ENCODE measurements at regions of chr1 and their contacts with region 1.

Region 1: DNA sequence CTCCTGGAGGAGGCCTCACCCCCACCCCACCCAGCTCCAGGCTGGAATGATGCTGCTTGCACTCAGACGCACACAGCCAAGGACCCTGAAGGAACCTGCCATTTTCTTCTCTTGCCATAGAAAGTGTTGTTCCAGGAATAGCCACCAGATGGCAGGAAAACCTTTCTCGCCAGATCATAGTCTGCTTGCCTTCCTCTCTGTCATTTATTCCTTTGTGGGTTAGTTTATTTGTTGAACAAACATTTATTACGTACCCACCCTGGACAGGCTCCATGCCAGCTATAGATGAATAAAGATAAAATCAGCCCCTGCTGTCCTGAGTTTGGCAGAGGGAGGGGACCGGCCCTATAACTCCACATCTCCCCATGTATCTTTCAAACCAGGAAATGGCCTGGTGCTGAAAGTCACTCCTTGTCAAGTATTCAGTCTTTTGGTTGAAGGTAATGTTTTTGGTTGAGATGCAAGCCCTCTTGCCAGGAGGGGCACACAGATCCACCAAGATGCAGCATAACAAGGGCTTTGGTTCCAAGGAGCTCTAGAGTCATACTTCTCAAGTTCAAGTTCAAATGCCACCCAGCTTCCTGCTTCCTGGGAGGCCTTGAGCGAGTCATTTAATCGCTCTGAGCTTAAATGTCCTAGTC is 7.0 kb upstream of the KCNC4 start:
- DNase-seq: peak; percentile 88
- H3K4me3 Mint-ChIP-seq: no peak overlapping the region
- H3K27ac Mint-ChIP-seq: peak overlapping the region; percentile 81
- H3K4me1 Mint-ChIP-seq: peaks cover 21% of the 10 kb centered on the region
- H3K27me3 Mint-ChIP-seq: no peaks in the 10 kb centered on the region

Region 2: DNA sequence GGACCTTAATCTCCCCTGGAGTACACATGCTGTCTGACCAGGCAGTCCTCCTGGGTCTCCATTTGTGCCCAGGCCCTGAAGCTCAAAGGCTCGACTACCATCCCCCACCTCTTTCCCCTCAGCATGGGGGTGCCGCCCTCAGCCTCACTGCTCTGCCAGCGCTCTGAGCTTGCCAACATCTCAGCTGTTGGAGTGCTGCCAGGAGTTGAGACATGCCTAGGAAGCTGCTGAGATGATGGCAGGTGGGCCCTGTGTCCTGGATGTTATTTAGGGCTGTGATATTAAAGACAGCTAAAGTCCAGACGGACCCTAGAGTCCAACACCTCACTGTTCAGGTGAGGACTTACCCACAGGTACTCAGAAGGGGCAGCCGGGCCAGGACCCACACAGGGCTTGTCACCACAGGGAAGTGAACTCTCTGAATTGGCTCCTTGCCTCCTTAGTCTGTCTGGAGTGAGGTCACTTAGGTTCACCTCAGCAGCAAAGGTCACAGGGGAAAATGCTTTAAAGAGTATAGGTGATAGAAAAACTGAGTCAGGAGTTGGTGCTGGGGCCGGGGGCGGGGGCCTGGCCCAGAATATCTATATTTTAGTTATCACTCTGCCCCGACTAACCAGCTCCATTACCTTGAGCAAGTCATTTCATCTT is 12.7 kb before region 1 on chr1:
- CTCF ChIA-PET with region 1: interaction called, 11 read pairs
- intact Hi-C with region 1: no loop called
- DNase-seq: no peak
- H3K4me3 Mint-ChIP-seq: no peak overlapping the region
- H3K27ac Mint-ChIP-seq: no peak overlapping the region
- H3K4me1 Mint-ChIP-seq: peaks cover 4% of the 10 kb centered on the region
- H3K27me3 Mint-ChIP-seq: no peaks in the 10 kb centered on the region

Region 3: DNA sequence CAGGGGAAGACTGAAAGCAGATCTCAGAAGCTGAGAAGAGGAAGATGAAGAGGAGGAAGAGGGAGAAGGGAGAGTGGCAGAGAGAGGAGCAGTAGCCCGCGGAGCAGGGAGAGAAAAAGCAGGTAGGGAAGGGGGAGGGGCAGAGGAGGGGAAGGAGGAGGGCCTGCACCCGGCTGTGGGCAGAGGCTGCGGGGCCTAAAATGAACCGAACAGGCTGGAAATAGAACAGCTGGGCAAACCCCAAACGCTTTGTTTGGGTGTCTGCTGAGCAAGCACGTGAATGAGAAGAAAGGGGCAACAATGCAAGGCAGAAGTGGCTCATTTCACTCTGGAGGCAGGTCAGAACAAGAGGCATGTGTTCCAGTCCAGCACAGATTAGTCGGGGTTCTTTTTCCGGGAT is 40.4 kb after region 1 on chr1:
- CTCF ChIA-PET with region 1: interaction called, 24 read pairs
- intact Hi-C with region 1: no loop called
- DNase-seq: peak; percentile 78
- H3K4me3 Mint-ChIP-seq: no peak overlapping the region
- H3K27ac Mint-ChIP-seq: peak overlapping the region; percentile 16
- H3K4me1 Mint-ChIP-seq: peaks cover 24% of the 10 kb centered on the region
- H3K27me3 Mint-ChIP-seq: no peaks in the 10 kb centered on the region

Region 4: DNA sequence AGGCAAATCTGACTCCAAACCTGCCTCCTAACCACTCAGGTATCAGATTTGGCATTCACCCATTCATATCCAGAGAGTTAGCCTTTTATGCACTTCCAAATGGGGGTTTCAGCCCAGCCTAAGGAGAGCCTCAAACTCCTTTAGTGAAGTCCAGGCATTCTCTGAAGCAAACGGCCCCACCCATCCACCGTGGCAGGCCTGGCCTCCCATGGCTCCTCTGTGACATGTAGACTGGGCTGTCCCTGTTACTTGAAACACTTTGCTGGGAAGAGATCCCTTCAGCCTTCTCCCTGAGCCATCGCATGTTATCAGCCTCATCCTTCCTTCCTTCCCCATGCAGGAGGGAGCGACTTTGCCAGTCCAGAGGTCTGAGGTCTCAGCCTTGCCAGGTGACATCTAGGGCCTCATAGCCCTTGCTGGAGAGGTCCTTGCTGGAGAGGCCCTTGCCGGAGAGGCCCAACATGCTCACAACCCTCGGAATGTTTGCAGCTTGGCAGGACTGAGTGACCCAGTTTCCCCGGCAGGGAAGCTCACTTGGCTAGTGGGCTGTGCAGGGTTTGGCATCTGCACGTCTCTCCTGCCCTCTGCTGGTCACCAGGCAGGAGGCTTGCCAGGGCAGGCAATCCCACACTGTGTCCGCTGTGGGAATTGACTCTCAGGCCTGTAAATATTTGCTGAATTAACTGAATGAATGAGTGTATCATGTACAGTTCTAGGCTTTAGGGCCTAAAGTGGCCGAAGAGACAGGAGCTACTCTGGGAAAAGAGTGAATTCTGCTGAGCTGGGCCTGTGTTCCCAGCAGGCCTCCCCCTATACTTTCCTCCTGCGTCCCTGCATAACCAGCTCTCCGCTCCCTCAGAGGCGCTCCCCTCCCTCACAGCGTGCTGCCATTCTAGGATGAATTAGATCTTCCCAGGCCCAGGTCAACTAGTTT is 109.3 kb after region 1 on chr1:
- CTCF ChIA-PET with region 1: interaction called, 644 read pairs
- intact Hi-C with region 1: loop called (anchors 1 kb)
- DNase-seq: peak; percentile 81
- H3K4me3 Mint-ChIP-seq: no peak overlapping the region
- H3K27ac Mint-ChIP-seq: no peak overlapping the region
- H3K4me1 Mint-ChIP-seq: no peaks in the 10 kb centered on the region
- H3K27me3 Mint-ChIP-seq: no peaks in the 10 kb centered on the region

Region 5: GRCh38 chr1:110407260-110408210 is 204.4 kb after region 1 on chr1 and contains the start of gene LAMTOR5:
- CTCF ChIA-PET with region 1: interaction called, 24 read pairs
- intact Hi-C with region 1: loop called (anchors 2 kb)
- DNase-seq: peak; percentile 96
- H3K4me3 Mint-ChIP-seq: peak within 1 kb of the TSS; percentile 99
- H3K27ac Mint-ChIP-seq: peak within 1 kb of the TSS; percentile 96
- H3K4me1 Mint-ChIP-seq: peaks cover 15% of the 10 kb centered on the region
- H3K27me3 Mint-ChIP-seq: no peaks in the 10 kb centered on the region
- total RNA-seq, gene LAMTOR5: 138 to 144 TPM

Region 6: DNA sequence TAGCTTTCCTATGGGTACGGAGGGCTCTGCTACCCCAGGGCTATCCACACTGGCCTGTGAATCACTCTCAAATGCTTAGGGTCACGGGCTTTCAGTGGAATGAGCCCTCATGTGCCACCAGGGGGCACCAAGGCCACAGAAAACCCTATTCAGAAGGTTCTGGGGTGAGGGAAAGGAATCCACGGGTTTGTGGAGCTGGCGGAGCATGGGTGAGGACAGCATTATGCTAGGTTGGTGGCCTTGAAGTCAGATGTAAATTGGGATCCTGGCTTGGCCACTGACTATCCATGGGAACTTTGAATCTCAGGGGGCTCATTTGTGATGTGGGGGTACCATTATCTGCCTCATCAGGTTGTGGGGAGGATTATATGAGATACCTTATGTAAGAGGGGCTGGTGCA is 209.4 kb after region 1 on chr1:
- CTCF ChIA-PET with region 1: interaction called, 24 read pairs
- intact Hi-C with region 1: loop called (anchors 2 kb)
- DNase-seq: peak; percentile 70
- H3K4me3 Mint-ChIP-seq: no peak overlapping the region
- H3K27ac Mint-ChIP-seq: no peak overlapping the region
- H3K4me1 Mint-ChIP-seq: peaks cover 7% of the 10 kb centered on the region
- H3K27me3 Mint-ChIP-seq: no peaks in the 10 kb centered on the region

Measured in activated naive CD4-positive, alpha-beta T cell treated with anti-CD3 and anti-CD28 coated beads for 36 hours (primary cell).